ENCODE measurements at regions of chr3 and their contacts with region 1.

Region 1: DNA sequence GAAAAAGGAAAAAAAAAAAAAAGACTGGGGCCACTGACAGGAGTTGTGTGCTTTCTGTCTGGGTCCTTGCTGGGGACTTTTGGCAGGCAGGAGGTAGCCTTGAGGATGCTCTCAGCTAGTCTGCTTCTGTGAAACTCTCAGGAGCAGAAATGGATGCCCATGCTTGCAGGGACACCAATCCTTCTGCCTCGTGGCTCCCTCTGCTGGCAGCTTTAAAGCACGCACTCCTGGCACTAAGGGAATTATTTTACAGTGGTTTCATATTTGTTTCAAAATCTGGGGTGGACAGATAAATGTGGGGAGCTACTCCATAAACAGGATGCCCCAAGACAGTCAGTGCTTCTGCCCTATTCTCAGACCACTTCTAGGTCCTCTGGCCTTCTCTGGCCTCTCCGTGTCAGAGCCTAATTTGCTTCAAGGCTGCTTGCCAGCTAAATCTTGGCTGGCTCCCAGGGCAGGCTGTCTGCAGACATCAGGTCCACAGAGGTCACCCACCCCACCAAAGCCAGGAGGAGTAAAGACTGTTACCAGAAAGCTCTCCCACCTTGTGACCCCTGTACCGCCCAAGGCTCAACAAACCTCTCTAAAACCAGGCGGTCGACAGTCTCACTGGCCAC is 17.1 kb downstream of the TRAIP start:
- DNase-seq: no peak
- H3K4me3 ChIP-seq: no peak overlapping the region
- H3K27ac ChIP-seq: peak overlapping the region in 2 of 4 donors; percentile 26 to 41
- H3K4me1 ChIP-seq: peaks cover 14 to 26% (median 20%) of the 10 kb centered on the region in 4 donors
- H3K27me3 ChIP-seq: no peaks in the 10 kb centered on the region
- CTCF ChIP-seq: peak; percentile 92 to 94 (median 94)
- EP300 ChIP-seq: no peak
- POLR2A ChIP-seq: no peak

Region 2: GRCh38 chr3:49351521-49352011 is 487.7 kb before region 1 on chr3:
- intact Hi-C with region 1: no loop called
- DNase-seq: no peak
- H3K4me3 ChIP-seq: no peak overlapping the region
- H3K27ac ChIP-seq: peak overlapping the region; percentile 38 to 66 (median 58)
- H3K4me1 ChIP-seq: peaks cover 12 to 39% (median 31%) of the 10 kb centered on the region in 4 donors
- H3K27me3 ChIP-seq: no peaks in the 10 kb centered on the region
- CTCF ChIP-seq: no peak
- EP300 ChIP-seq: no peak
- POLR2A ChIP-seq: no peak

Region 3: GRCh38 chr3:49703443-49703927 is 135.8 kb before region 1 on chr3:
- intact Hi-C with region 1: loop called (anchors 5 kb)
- DNase-seq: no peak
- H3K4me3 ChIP-seq: no peak overlapping the region
- H3K27ac ChIP-seq: no peak overlapping the region
- H3K4me1 ChIP-seq: peaks cover 0 to 4% (median 2%) of the 10 kb centered on the region in 4 donors
- H3K27me3 ChIP-seq: no peaks in the 10 kb centered on the region
- CTCF ChIP-seq: peak; percentile 69 to 94 (median 77)
- EP300 ChIP-seq: no peak
- POLR2A ChIP-seq: no peak

Region 4: DNA sequence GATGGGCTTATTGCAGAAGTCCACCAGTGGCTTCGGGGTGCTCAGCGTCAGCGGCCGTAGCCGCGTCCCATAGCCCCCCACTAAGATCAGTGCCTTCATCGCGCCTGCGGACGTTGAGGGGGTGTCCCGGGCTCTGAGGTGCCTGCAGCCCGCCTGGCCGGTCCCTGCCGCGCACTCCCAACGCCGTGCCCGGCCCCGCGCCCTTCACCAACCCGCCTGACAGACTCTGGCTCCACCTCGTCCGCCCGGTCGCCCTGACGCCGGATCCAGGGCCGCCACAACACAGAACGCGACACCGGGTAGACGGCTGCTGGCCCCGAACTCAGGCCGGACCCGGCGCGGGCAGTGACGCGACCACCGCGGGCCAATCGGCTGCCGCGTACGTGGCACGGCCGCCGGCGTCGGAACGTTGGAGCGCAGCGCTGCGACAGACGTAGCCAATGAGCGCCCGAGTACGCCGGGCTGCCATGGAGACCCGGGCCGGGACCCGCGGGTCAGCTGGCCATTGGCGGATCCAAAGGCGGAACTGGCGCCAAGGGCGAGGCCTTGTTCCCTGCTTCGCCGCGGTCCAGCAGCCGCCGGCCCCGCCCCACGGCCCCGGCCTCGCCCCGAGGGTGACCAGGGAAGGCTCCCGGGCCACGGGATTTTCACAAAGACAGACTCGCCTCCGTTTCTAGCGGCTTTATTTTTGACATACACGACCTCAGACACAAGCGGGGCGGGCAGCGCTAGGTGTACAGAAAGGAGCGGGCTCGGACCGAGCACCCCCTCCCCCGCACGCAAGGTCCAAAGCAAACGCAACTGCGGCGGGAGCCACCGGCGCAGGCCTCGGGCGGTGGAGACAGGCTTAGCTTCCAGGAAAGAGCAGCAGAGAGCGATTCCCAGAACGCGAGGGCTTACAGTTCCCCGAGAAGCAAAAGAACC is 115.4 kb before region 1 on chr3 and contains the start of gene GMPPB:
- intact Hi-C with region 1: loop called (anchors 5 kb)
- DNase-seq: peak; percentile 99
- H3K4me3 ChIP-seq: peak within 1 kb of the TSS; percentile 86 to 99 (median 94)
- H3K27ac ChIP-seq: peak within 1 kb of the TSS; percentile 92 to 98 (median 94)
- H3K4me1 ChIP-seq: peaks cover 29 to 51% (median 45%) of the 10 kb centered on the region in 4 donors
- H3K27me3 ChIP-seq: no peaks in the 10 kb centered on the region
- CTCF ChIP-seq: no peak
- EP300 ChIP-seq: no peak
- POLR2A ChIP-seq: peak; percentile 68
- total RNA-seq, gene GMPPB: 12.0 to 18.9 (median 17.6) TPM

Region 5: GRCh38 chr3:49802719-49803464 is 36.4 kb before region 1 on chr3 and contains the start of gene INKA1:
- intact Hi-C with region 1: loop called (anchors 1 kb)
- DNase-seq: peak; percentile 97
- H3K4me3 ChIP-seq: peak within 1 kb of the TSS; percentile 70 to 99 (median 85)
- H3K27ac ChIP-seq: peak within 1 kb of the TSS; percentile 87 to 98 (median 91)
- H3K4me1 ChIP-seq: peaks cover 46 to 65% (median 62%) of the 10 kb centered on the region in 4 donors
- H3K27me3 ChIP-seq: peaks cover 0 to 4% (median 0%) of the 10 kb centered on the region in 4 donors
- CTCF ChIP-seq: peak; percentile 88 to 94 (median 90)
- EP300 ChIP-seq: no peak
- POLR2A ChIP-seq: peak; percentile 29
- total RNA-seq, gene INKA1: 3.3 to 5.8 (median 4.0) TPM

Region 6: DNA sequence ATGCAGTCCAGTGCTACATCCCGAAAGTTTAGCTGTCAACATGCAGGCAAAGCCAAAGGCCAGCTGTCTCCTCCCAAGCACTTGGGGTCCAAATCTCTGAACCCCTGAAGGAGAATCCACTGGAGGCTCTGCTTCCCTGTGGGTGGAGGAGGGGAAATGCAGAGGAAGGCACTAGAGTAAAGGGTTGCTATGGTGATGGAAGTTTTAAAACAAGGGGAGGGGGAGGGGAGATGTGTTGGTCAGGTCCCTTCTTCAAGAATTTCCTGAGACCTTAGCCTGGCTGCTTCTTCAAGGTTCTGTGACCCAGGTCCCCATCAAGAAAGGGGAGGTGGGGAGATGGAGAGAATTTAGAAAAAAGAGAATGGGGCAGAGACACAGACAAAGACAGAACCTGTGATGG is 28.1 kb after region 1 on chr3:
- intact Hi-C with region 1: no loop called
- DNase-seq: no peak
- H3K4me3 ChIP-seq: no peak overlapping the region
- H3K27ac ChIP-seq: no peak overlapping the region
- H3K4me1 ChIP-seq: peaks cover 10 to 16% (median 15%) of the 10 kb centered on the region in 4 donors
- H3K27me3 ChIP-seq: peaks cover 0 to 74% (median 20%) of the 10 kb centered on the region in 4 donors
- CTCF ChIP-seq: no peak
- EP300 ChIP-seq: no peak
- POLR2A ChIP-seq: no peak

Region 7: DNA sequence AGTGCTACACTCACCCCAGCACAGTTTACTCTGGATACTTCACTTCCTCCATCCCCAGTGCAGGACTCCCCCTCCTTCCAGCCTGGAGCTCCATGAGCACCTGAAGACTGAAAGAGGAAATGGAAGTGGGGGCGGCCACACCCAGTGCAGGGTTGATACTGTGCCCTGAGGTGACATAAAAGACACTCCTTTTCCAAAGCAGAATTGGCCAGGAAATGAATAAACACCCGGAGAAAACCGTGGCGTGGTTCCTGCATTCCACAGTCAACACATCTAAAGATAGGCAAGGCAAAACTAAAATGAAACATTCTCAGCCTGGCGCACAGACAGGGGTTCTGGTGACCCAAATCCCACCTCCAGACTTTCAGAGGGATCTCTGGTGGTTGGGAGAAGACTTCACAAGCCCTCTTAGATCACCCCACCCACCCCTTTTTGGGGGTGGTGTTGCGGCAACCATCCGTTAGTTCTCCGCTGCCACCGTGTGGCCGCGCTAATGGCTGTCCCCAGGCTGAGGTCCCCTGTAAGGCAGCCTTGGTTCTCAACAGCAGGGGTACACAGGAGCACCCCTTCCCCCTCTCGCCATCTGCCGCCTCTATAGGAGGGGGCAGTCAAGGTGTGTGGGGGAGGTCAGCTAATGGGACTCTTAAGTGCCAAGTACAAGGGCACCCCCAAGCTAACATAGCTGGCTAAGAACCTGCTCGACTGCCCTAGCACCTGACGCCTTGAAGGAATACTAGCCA is 66.9 kb after region 1 on chr3:
- intact Hi-C with region 1: loop called (anchors 5 kb)
- DNase-seq: no peak
- H3K4me3 ChIP-seq: peak overlapping the region; percentile 34 to 52 (median 38)
- H3K27ac ChIP-seq: peak overlapping the region; percentile 37 to 58 (median 50)
- H3K4me1 ChIP-seq: peaks cover 27 to 53% (median 44%) of the 10 kb centered on the region in 4 donors
- H3K27me3 ChIP-seq: no peaks in the 10 kb centered on the region
- CTCF ChIP-seq: peak; percentile 65 to 73 (median 65)
- EP300 ChIP-seq: no peak
- POLR2A ChIP-seq: no peak